ENCODE measurements at regions of chr11 and their contacts with region 1.

Region 1: GRCh38 chr11:6682936-6683861 is at the start of gene MRPL17:
- DNase-seq: peak; percentile 99
- H3K4me3 ChIP-seq: peak within 1 kb of the TSS; percentile 72
- H3K27ac ChIP-seq: peak within 1 kb of the TSS; percentile 93
- H3K4me1 ChIP-seq: peaks cover 38% of the 10 kb centered on the region
- H3K27me3 ChIP-seq: no peaks in the 10 kb centered on the region
- CTCF ChIP-seq: peak; percentile 95
- total RNA-seq, gene MRPL17: 40.2 TPM

Region 2: GRCh38 chr11:6531267-6531752 is 151.9 kb before region 1 on chr11:
- intact Hi-C with region 1: loop called (anchors 10 kb)
- DNase-seq: no peak
- H3K4me3 ChIP-seq: no peak overlapping the region
- H3K27ac ChIP-seq: no peak overlapping the region
- H3K4me1 ChIP-seq: no peaks in the 10 kb centered on the region
- H3K27me3 ChIP-seq: no peaks in the 10 kb centered on the region
- CTCF ChIP-seq: peak; percentile 88

Region 3: DNA sequence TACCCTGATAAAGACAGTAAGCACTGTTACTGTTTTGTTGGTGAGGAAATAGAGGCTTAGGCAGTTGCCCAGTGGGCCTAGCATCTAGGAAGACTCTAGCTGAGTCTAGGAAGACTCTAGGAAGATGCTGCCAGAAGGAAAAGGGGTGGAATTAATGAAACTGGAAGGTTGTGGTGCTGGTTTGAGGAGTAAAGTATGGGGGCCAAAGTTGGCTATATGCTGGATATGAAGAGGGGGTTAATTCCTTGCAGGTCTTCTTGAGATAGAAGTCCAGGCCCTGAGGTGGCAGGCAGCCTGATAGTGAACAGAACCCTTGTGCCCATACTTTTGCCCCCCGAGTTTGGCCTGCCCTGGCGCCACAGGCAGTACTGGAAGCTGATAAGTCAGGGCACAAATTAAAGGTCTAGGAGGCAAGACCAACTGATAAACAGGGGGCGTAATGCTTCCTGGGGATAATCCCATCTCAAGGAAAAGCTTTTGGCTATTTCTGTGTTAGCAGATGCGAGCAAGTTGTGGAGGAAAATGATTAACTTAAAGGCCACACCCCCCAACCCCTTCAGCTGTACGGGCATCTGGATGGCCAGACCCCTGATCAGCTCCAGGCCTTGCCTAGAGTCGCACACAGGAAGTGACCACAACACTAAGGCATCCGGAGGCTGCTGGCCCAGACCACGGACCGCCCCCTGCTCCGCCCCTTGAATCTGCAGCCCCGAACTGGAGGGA is 76.6 kb before region 1 on chr11:
- intact Hi-C with region 1: loop called (anchors 2 kb)
- DNase-seq: peak; percentile 95
- H3K4me3 ChIP-seq: peak overlapping the region; percentile 90
- H3K27ac ChIP-seq: peak overlapping the region; percentile 98
- H3K4me1 ChIP-seq: peaks cover 98% of the 10 kb centered on the region
- H3K27me3 ChIP-seq: no peaks in the 10 kb centered on the region
- CTCF ChIP-seq: no peak

Measured in left ventricle myocardium inferior (tissue), 1 donor.